ENCODE measurements at regions of chr17 and their contacts with region 1.

Region 1: GRCh38 chr17:68291844-68292695 is 775 bp downstream of the ARSG start:
- DNase-seq: peak; percentile 80 to 98 (median 96)
- ATAC-seq: peak; percentile 83
- H3K4me3 ChIP-seq: peak overlapping the region; percentile 92
- H3K4me3 Mint-ChIP-seq: peak overlapping the region; percentile 82 to 100 (median 88)
- H3K27ac ChIP-seq: peak overlapping the region; percentile 95
- H3K27ac Mint-ChIP-seq: peak overlapping the region; percentile 83 to 99 (median 91)
- H3K4me1 ChIP-seq: peaks cover 53% of the 10 kb centered on the region in 2 donors
- H3K4me1 Mint-ChIP-seq: peaks cover 46 to 79% (median 69%) of the 10 kb centered on the region in 7 donors
- H3K27me3 ChIP-seq: no peaks in the 10 kb centered on the region
- H3K27me3 Mint-ChIP-seq: peaks cover 0 to 16% (median 0%) of the 10 kb centered on the region in 5 donors

Region 2: GRCh38 chr17:67993596-67994361 is 298.3 kb before region 1 on chr17:
- CTCF ChIA-PET with region 1: no interaction called
- POLR2A ChIA-PET with region 1: no interaction called
- intact Hi-C with region 1: loop called in 1 of 2 experiments (anchors 2 kb)
- DNase-seq: peak in 3 of 9 donors; percentile 13 to 29 (median 22)
- ATAC-seq: peak; percentile 89
- H3K4me3 ChIP-seq: peak overlapping the region; percentile 50
- H3K4me3 Mint-ChIP-seq: peak overlapping the region; percentile 74 to 95 (median 86)
- H3K27ac ChIP-seq: peak overlapping the region; percentile 51
- H3K27ac Mint-ChIP-seq: peak overlapping the region in 8 of 9 donors; percentile 38 to 86 (median 54)
- H3K4me1 ChIP-seq: peaks cover 19 to 24% of the 10 kb centered on the region in 2 donors
- H3K4me1 Mint-ChIP-seq: peaks cover 21 to 38% (median 32%) of the 10 kb centered on the region in 7 donors
- H3K27me3 ChIP-seq: peaks cover 0 to 7% of the 10 kb centered on the region in 2 donors
- H3K27me3 Mint-ChIP-seq: peaks cover 5 to 38% (median 21%) of the 10 kb centered on the region in 5 donors

Region 3: DNA sequence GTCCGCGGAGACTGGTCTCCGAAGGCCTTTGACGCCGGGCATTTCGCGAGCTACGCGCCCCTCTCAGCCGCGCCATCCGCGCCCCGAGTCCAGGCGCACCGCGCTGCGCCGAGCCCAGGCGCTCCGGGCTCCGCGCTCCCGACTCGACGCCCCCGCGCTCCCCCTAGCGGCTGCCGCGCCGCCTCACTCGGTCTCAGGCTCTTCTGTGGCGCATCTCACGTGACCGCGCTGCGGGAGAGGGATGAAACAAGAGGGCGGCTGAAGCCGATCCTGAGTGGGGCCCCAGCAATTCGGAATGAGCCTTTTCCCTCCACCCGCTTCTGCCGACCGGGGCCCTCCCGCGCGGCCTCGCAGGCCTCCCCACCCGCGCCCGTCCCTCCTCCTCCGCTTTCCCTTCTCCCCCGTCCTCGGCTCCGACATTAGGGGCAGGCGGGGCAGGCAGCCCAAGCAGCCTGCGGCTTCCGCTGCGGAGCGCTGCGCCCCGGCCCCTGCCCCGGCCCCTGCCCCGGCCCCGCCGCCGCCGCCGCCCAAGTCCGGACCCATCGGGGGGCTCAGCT is 86.7 kb before region 1 on chr17:
- CTCF ChIA-PET with region 1: no interaction called
- POLR2A ChIA-PET with region 1: interaction called, 25 read pairs
- intact Hi-C with region 1: loop called in 1 of 2 experiments (anchors 1 kb)
- DNase-seq: peak; percentile 81 to 96 (median 91)
- ATAC-seq: peak; percentile 94
- H3K4me3 ChIP-seq: peak overlapping the region; percentile 50
- H3K4me3 Mint-ChIP-seq: peak overlapping the region; percentile 82 to 96 (median 88)
- H3K27ac ChIP-seq: peak overlapping the region; percentile 81
- H3K27ac Mint-ChIP-seq: peak overlapping the region in 7 of 9 donors; percentile 62 to 94 (median 88)
- H3K4me1 ChIP-seq: peaks cover 3 to 11% of the 10 kb centered on the region in 2 donors
- H3K4me1 Mint-ChIP-seq: peaks cover 7 to 38% (median 28%) of the 10 kb centered on the region in 7 donors
- H3K27me3 ChIP-seq: no peaks in the 10 kb centered on the region
- H3K27me3 Mint-ChIP-seq: peaks cover 0 to 12% (median 0%) of the 10 kb centered on the region in 5 donors

Region 4: GRCh38 chr17:68273722-68274121 is 18.3 kb before region 1 on chr17:
- CTCF ChIA-PET with region 1: interaction called, 5 read pairs
- POLR2A ChIA-PET with region 1: interaction called, 12 read pairs
- intact Hi-C with region 1: no loop called
- DNase-seq: no peak
- ATAC-seq: no peak
- H3K4me3 ChIP-seq: no peak overlapping the region
- H3K4me3 Mint-ChIP-seq: no peak overlapping the region
- H3K27ac ChIP-seq: no peak overlapping the region
- H3K27ac Mint-ChIP-seq: no peak overlapping the region
- H3K4me1 ChIP-seq: no peaks in the 10 kb centered on the region
- H3K4me1 Mint-ChIP-seq: peaks cover 0 to 5% (median 0%) of the 10 kb centered on the region in 7 donors
- H3K27me3 ChIP-seq: no peaks in the 10 kb centered on the region
- H3K27me3 Mint-ChIP-seq: no peaks in the 10 kb centered on the region

Region 5: DNA sequence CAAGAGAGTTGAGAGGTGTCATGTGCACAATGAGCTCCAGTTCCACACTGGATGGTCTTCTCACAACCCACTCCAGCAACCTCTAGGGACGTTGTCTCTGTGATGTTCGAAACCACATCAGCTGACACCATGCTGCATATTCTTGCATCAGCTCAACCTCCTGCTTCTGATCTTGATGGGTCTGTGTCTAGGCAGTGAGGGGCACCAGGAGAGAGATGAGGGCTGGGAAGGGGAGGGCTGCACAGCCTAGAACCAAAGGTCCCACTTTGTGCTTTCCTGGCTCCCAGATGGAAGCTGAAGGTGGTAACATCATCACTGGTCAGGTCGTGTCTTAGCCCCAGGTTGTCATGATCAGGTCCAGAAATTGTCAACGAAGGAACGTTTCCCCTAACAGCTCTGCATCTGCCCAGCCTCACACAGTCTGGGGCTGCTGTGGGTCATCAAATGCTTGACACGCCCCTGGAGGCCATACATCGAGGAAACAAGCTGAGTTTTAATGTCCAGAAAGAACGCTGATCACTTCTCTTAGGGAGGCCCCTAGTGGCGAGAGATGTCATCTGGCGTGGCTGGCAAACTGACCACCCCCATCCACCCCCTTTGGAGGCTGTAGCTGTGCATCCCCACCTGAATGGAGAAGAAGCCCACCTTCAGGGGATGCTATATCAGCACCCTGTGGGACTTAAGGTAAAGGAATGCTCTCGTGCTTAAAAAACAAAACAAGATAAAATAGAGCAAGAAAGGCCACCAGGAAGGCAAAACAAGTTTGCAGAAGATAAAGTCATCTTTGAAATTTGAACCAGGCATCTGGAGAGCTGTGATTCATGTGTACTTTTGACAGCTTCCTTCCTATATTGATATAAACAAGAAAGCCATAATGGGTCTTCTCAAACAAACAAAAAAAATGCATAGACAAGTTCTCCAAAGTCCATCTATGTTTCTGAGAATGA is 106.9 kb after region 1 on chr17:
- CTCF ChIA-PET with region 1: no interaction called
- POLR2A ChIA-PET with region 1: interaction called, 26 read pairs
- intact Hi-C with region 1: no loop called
- DNase-seq: no peak
- ATAC-seq: peak; percentile 87
- H3K4me3 ChIP-seq: no peak overlapping the region
- H3K4me3 Mint-ChIP-seq: peak overlapping the region in 9 of 10 donors; percentile 0 to 73 (median 34)
- H3K27ac ChIP-seq: no peak overlapping the region
- H3K27ac Mint-ChIP-seq: peak overlapping the region in 5 of 9 donors; percentile 10 to 85 (median 48)
- H3K4me1 ChIP-seq: peaks cover 13 to 34% of the 10 kb centered on the region in 2 donors
- H3K4me1 Mint-ChIP-seq: peaks cover 15 to 37% (median 35%) of the 10 kb centered on the region in 7 donors
- H3K27me3 ChIP-seq: no peaks in the 10 kb centered on the region
- H3K27me3 Mint-ChIP-seq: no peaks in the 10 kb centered on the region

Region 6: DNA sequence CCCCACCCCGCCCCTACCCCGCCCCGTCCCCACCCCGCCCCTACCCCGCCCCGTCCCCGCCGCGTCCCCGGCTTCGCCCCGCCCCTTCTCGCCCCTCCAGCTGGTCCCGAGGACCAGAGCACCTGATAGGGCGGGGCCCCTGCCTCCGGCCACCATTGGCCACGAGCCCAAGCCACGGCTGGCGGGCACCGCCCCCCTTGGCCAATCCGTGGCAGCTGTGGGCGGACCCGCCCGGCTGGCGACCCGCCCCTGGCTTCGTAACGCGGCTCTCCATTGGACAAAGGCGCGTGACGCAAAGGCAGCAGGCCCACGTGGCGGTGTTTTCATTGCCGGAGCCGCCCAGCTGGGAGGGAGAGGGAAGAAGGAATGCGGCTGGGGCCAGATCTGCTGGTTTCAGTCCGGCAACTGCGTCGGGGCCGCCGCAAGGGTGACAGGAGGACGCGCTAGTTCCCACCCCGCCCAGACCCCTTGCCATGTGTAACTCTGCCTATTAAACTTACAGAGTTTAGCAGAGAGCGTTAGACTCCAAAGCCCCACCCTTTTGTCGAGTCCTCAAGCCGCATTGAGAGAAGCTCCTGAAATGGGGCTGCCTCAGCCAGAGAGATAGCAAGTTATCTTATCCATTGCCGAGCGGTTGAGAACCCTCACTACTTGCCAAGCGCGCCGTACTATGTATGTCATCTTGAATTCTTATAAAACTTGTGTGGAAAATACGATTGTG is 165.6 kb after region 1 on chr17:
- CTCF ChIA-PET with region 1: interaction called, 4 read pairs
- POLR2A ChIA-PET with region 1: interaction called, 36 read pairs
- intact Hi-C with region 1: loop called (anchors 1 kb)
- DNase-seq: peak; percentile 96 to 99 (median 97)
- ATAC-seq: peak; percentile 98
- H3K4me3 ChIP-seq: peak overlapping the region; percentile 52
- H3K4me3 Mint-ChIP-seq: peak overlapping the region; percentile 68 to 87 (median 84)
- H3K27ac ChIP-seq: peak overlapping the region; percentile 73
- H3K27ac Mint-ChIP-seq: peak overlapping the region; percentile 45 to 98 (median 91)
- H3K4me1 ChIP-seq: peaks cover 36 to 52% of the 10 kb centered on the region in 2 donors
- H3K4me1 Mint-ChIP-seq: peaks cover 26 to 66% (median 58%) of the 10 kb centered on the region in 7 donors
- H3K27me3 ChIP-seq: no peaks in the 10 kb centered on the region
- H3K27me3 Mint-ChIP-seq: no peaks in the 10 kb centered on the region

Measured in naive thymus-derived CD4-positive, alpha-beta T cell (primary cell).